ENCODE measurements at regions of chr20 and their contacts with region 1.

Region 1: DNA sequence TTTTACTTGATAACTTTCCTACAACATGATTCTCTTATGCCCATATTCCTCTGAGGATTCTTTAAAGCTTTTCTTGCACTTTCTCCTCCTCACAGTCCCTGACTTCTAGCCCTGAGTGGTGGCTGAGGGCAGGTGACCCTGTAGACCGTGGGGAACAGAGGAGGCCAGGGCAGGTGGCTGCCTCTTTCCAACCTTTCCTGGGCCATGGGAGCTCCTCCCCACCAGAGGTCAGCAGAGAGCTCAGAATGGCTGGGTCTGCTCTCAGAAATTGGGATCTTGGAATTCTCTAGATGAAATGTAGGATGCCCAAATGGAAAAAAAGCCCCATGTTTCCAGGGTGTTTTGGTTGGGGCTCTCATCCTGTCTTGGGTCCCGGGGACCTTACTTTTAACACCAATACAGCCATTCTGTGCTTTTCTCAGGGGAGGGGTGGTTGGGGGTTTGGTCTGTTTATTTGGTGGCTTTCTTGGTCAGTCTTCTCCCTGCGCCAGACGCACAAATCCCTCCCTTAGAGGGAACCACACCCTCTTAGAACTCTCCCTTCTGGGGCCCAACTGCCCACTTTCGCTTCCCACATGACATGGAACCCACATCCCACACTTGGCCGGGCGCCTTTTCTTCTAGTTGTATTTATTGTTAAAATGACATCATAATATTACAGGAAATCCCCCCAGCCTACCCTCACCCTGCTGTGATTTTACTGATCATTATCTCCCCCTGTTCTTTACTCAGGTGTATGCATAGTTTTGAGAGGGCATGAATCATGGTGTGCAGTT is 17.9 kb downstream of the GNAS start:
- DNase-seq: peak; percentile 75
- H3K4me3 ChIP-seq: no peak overlapping the region
- H3K27ac ChIP-seq: no peak overlapping the region
- H3K4me1 ChIP-seq: peaks cover 0 to 8% (median 0%) of the 10 kb centered on the region in 4 donors
- H3K27me3 ChIP-seq: peaks cover 6% of the 10 kb centered on the region
- CTCF ChIP-seq: peak; percentile 81 to 88 (median 85)
- EP300 ChIP-seq: no peak
- POLR2A ChIP-seq: no peak

Region 2: DNA sequence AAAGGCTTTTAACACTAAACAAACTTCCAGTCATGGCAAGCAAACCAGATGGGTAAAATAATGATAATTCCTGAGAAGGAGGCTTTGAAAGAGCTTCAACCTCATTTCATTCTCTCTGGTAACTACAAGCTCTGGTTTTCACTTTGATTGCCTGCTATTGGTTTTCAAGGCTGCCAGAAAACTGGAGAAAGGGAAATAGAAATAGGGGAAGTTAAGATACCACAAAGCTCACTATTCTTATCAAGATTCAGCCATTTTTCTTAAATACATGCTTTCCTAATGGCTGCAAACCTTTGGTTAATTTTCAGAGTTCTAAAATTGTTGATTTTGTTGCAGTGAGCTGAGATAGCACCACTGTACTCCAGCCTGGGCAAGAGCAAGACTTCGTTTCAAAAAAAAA is 68.1 kb after region 1 on chr20:
- in situ Hi-C with region 1: loop called in 1 of 4 experiments (anchors 10 kb)
- intact Hi-C with region 1: no loop called
- DNase-seq: no peak
- H3K4me3 ChIP-seq: no peak overlapping the region
- H3K27ac ChIP-seq: no peak overlapping the region
- H3K4me1 ChIP-seq: no peaks in the 10 kb centered on the region
- H3K27me3 ChIP-seq: peaks cover 7% of the 10 kb centered on the region
- CTCF ChIP-seq: no peak
- EP300 ChIP-seq: no peak
- POLR2A ChIP-seq: no peak

Region 3: GRCh38 chr20:58963064-58963584 is 92.7 kb after region 1 on chr20:
- in situ Hi-C with region 1: no loop called
- intact Hi-C with region 1: no loop called
- DNase-seq: no peak
- H3K4me3 ChIP-seq: no peak overlapping the region
- H3K27ac ChIP-seq: peak overlapping the region in 2 of 4 donors; percentile 33 to 40
- H3K4me1 ChIP-seq: no peaks in the 10 kb centered on the region
- H3K27me3 ChIP-seq: peaks cover 3% of the 10 kb centered on the region
- CTCF ChIP-seq: peak in 1 of 5 experiments; percentile 21
- EP300 ChIP-seq: no peak
- POLR2A ChIP-seq: no peak

Region 4: GRCh38 chr20:59074445-59074844 is 204.0 kb after region 1 on chr20:
- in situ Hi-C with region 1: loop called in 2 of 4 experiments (anchors 10 to 25 kb)
- intact Hi-C with region 1: no loop called
- DNase-seq: no peak
- H3K4me3 ChIP-seq: no peak overlapping the region
- H3K27ac ChIP-seq: no peak overlapping the region
- H3K4me1 ChIP-seq: no peaks in the 10 kb centered on the region
- H3K27me3 ChIP-seq: peaks cover 28% of the 10 kb centered on the region
- CTCF ChIP-seq: no peak
- EP300 ChIP-seq: no peak
- POLR2A ChIP-seq: no peak

Region 5: GRCh38 chr20:59087829-59088433 is 217.5 kb after region 1 on chr20:
- in situ Hi-C with region 1: loop called in 2 of 4 experiments (anchors 10 to 25 kb)
- intact Hi-C with region 1: no loop called
- DNase-seq: peak; percentile 89
- H3K4me3 ChIP-seq: no peak overlapping the region
- H3K27ac ChIP-seq: no peak overlapping the region
- H3K4me1 ChIP-seq: no peaks in the 10 kb centered on the region
- H3K27me3 ChIP-seq: peaks cover 3% of the 10 kb centered on the region
- CTCF ChIP-seq: peak; percentile 89 to 95 (median 94)
- EP300 ChIP-seq: no peak
- POLR2A ChIP-seq: no peak

Region 6: GRCh38 chr20:59207742-59208357 is 337.4 kb after region 1 on chr20:
- in situ Hi-C with region 1: loop called in 1 of 4 experiments (anchors 10 kb)
- intact Hi-C with region 1: loop called (anchors 5 kb)
- DNase-seq: peak; percentile 81
- H3K4me3 ChIP-seq: no peak overlapping the region
- H3K27ac ChIP-seq: no peak overlapping the region
- H3K4me1 ChIP-seq: no peaks in the 10 kb centered on the region
- H3K27me3 ChIP-seq: no peaks in the 10 kb centered on the region
- CTCF ChIP-seq: peak; percentile 54 to 80 (median 65)
- EP300 ChIP-seq: no peak
- POLR2A ChIP-seq: no peak

Region 7: DNA sequence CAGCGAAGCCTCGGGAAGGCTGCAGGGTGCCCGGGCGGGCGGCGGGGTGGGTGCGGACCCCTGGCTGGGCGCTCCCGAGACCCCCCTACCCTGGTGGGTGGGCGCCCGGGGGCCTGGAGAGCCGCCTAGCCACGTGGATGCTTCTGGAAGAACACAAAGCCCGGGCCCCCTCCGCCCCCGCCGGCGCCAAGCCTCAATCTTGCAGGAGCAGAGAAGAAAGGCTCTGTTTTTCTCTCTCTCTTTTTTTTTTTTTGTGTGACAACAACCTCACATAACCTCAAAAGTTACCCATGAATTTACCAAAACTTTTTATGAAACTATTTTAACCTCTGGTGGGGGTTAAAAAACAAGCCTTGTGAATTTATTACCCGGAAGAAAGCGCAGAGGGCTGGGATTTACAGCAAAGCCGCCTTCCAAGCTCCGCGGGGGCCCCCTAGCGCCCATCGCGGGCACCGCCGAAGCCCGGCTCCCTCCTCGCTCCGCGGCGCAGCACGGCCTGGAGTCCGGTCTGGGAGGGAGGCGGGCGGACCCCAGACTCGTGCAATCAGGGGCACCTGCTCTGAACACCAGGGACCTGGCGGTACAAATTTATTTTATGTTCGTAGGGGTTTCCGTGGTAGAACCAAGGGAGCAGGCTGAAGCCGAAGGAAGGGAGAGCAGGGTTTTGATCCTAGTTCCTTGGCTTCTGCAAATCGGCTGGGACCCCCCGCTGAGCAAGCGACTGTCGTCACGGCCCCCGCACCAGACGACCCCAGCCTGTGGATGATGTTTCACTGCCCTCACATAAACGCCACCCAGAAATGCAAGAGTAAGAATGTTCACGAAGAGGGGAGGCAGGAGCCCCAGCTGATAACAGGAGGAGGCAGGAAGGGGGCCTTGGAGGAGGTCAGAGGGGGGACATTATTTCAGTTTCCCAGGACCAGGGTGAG is 352.1 kb after region 1 on chr20:
- in situ Hi-C with region 1: loop called (anchors 5 to 10 kb)
- intact Hi-C with region 1: loop called (anchors 5 kb)
- DNase-seq: peak; percentile 88
- H3K4me3 ChIP-seq: peak overlapping the region; percentile 7 to 86 (median 50)
- H3K27ac ChIP-seq: peak overlapping the region; percentile 11 to 79 (median 68)
- H3K4me1 ChIP-seq: peaks cover 4 to 21% (median 9%) of the 10 kb centered on the region in 4 donors
- H3K27me3 ChIP-seq: peaks cover 39% of the 10 kb centered on the region
- CTCF ChIP-seq: peak; percentile 91 to 99 (median 95)
- EP300 ChIP-seq: no peak
- POLR2A ChIP-seq: no peak

Region 8: GRCh38 chr20:59403261-59403961 is 533.0 kb after region 1 on chr20:
- in situ Hi-C with region 1: loop called in 3 of 4 experiments (anchors 10 to 25 kb)
- intact Hi-C with region 1: no loop called
- DNase-seq: peak; percentile 62
- H3K4me3 ChIP-seq: peak overlapping the region in 2 of 4 donors; percentile 1 to 23
- H3K27ac ChIP-seq: no peak overlapping the region
- H3K4me1 ChIP-seq: peaks cover 7 to 18% (median 11%) of the 10 kb centered on the region in 4 donors
- H3K27me3 ChIP-seq: peaks cover 72% of the 10 kb centered on the region
- CTCF ChIP-seq: peak; percentile 91 to 100 (median 99)
- EP300 ChIP-seq: no peak
- POLR2A ChIP-seq: no peak